IMR-90 (cell line): ENCODE measurements at regions of chr6 and their contacts with region 1.

Region 1: GRCh38 chr6:136483906-136484305 is 66.3 kb downstream of the MAP7 start:
- DNase-seq: no peak
- ATAC-seq: no peak
- H3K4me3 ChIP-seq: no peak overlapping the region
- H3K27ac ChIP-seq: no peak overlapping the region
- H3K4me1 ChIP-seq: no peaks in the 10 kb centered on the region
- H3K27me3 ChIP-seq: peaks cover 2% of the 10 kb centered on the region; the same call in 1 of the 2 replicates
- CTCF ChIP-seq: no peak
- POLR2A ChIP-seq: no peak
- RAD21 ChIP-seq: no peak

Region 2: DNA sequence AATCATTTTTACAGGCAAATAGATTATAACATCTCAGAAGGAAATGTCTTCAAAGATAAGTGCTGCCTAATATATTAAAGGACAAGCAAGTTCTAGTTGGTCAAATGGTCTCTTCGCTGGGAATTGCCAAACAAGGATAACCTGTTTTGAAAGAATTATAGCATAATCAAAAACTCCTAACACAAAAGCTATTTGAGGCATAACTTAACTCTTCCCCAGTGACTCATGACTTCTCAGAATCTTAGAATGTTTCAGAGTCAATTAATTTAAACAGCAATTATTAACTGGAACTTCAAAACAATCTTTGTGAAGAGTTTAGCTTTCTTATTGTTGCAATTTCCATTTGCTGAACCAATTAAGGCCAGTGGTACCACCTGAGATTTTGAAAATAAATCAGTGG is 360.4 kb before region 1 on chr6:
- CTCF ChIA-PET with region 1: no interaction called
- POLR2A ChIA-PET with region 1: interaction called, 10 read pairs
- dilution Hi-C with region 1: no loop called
- in situ Hi-C with region 1: no loop called
- intact Hi-C with region 1: no loop called
- DNase-seq: peak; percentile 73
- ATAC-seq: peak; percentile 65
- H3K4me3 ChIP-seq: no peak overlapping the region
- H3K27ac ChIP-seq: no peak overlapping the region
- H3K4me1 ChIP-seq: no peaks in the 10 kb centered on the region; the same call in 1 of the 2 replicates
- H3K27me3 ChIP-seq: no peaks in the 10 kb centered on the region
- CTCF ChIP-seq: no peak
- POLR2A ChIP-seq: no peak
- RAD21 ChIP-seq: no peak